Sigmoid colon (tissue), 7 donors: ENCODE measurements at regions of chr9 and their contacts with region 1.

Region 1: GRCh38 chr9:81689343-81690190 is at the start of gene TLE1:
- DNase-seq: peak; percentile 100
- H3K4me3 ChIP-seq: peak within 1 kb of the TSS; percentile 83 to 95 (median 86)
- H3K27ac ChIP-seq: peak within 1 kb of the TSS; percentile 94 to 96 (median 96)
- H3K4me1 ChIP-seq: peaks cover 0 to 32% (median 24%) of the 10 kb centered on the region in 4 donors
- H3K27me3 ChIP-seq: no peaks in the 10 kb centered on the region
- CTCF ChIP-seq: no peak
- EP300 ChIP-seq: peak in 2 of 4 donors; percentile 41 to 65
- POLR2A ChIP-seq: peak; percentile 62 to 66
- total RNA-seq, gene TLE1: 45.7 to 54.6 (median 50.6) TPM

Region 2: DNA sequence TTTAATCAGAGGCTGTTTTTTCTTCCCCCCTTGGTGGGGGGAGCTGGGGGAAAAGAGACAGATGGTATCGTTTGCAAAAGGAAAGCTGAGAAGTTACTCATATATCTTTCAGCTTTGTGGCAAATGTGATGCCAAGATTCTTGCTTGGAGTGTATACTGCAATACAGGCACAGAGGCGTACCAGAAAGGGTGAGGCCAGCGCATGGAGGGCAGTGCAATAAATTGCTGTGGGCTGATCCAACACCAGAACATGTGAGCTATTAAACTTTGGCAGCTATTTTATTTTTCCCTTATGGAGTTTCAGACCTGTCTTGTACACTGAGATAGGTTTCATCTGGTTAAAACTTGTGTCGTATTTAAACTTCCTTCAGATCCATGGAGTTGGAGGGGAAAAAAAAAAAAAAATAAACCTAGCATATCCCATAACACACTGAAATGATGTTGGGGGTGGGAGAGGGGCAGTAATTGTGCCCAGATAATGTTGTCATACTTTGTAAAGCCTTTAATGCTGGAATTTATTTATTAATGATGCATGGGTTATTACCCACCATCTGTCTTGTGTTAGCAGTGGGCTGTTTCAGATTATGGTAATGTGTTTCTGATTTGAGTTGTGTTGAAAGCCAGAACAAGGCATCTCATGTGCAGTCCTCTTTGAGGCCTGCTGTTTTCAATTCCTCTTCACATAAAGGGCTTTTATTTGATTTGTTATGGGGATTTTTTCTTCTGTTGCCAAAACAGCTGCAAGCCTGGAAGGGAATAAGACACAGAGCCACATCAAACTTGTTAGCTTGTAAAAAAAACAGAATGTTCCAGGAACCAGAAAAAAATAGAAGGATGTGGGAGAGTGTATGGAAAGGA is 891.5 kb before region 1 on chr9:
- intact Hi-C with region 1: loop called (anchors 5 kb)
- DNase-seq: peak; percentile 91
- H3K4me3 ChIP-seq: peak overlapping the region in 1 of 4 donors; percentile 6
- H3K27ac ChIP-seq: peak overlapping the region; percentile 69 to 80 (median 76)
- H3K4me1 ChIP-seq: peaks cover 0 to 38% (median 33%) of the 10 kb centered on the region in 4 donors
- H3K27me3 ChIP-seq: no peaks in the 10 kb centered on the region
- CTCF ChIP-seq: no peak
- EP300 ChIP-seq: peak; percentile 47 to 92 (median 76)
- POLR2A ChIP-seq: no peak

Region 3: DNA sequence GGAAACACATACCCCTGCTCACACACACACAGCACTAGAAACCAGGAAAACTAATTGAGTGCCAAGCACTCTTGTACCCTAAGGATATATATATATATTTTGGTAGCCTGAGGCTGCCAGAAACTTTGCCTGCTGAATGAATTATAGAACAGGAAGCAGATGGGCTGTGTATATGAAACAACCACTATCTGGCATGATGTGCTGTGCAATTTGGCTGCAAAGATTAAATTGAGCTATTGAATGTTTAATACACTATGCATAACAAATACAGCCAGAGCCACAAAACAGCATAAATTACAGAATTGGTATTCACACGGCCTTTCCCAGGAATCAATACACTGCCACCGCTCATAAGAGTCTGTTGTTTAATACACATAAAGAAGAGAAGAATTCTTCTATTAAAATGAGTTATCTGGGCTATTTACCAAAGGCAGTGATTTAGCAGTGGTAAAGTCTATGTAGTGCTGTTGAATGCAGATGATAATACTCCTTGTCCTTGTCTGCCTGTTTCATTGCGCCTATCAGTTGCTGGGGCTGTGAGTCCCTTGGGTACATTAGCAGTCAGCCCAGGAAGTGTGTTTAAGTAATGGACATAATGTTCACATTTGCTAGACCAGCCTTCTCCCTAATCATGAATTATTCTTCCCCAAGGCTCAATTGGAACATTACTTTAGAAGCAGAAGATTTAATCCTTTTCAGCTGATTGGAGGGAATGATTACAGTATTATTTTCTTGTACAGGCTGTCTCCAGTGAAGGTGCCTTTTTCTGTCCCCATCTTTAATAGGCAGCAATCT is 294.5 kb before region 1 on chr9:
- intact Hi-C with region 1: loop called (anchors 10 kb)
- DNase-seq: no peak
- H3K4me3 ChIP-seq: no peak overlapping the region
- H3K27ac ChIP-seq: peak overlapping the region; percentile 52 to 75 (median 71)
- H3K4me1 ChIP-seq: peaks cover 0 to 40% (median 38%) of the 10 kb centered on the region in 4 donors
- H3K27me3 ChIP-seq: no peaks in the 10 kb centered on the region
- CTCF ChIP-seq: no peak
- EP300 ChIP-seq: no peak
- POLR2A ChIP-seq: no peak

Region 4: DNA sequence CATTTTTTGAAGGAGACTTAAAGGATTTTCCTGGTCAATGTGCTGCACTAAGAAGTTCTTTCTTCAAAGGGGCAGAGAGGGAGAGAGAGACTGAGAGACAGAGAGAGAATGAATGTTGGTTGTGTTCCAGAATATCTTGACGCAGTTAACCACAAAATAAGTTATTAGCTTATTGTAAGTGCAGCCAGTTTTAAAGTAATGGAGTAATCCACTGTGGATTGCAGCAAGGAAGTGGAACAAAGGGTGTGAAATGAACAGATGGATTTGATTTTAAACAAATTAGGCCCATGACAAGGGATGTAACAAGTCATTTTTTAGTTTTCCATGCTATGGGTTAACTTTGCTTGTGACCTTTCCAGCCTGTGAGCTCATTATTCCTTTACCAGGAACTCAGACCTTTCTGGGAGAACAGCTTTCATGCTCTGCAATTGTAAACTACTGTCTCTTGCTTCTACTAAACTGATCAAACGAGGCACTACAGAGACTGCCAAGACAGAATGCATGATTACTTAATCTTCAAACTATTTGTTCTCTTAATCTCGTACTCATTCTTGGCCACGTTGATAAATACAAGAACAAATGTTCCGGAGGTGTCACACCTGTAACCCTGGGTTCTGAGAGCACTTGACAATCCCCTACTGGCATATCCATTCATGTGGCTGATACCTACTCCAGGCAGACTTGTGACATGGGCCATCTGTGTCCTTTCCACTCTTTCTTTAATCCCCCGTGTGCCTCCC is 131.3 kb before region 1 on chr9:
- intact Hi-C with region 1: no loop called
- DNase-seq: no peak
- H3K4me3 ChIP-seq: no peak overlapping the region
- H3K27ac ChIP-seq: peak overlapping the region; percentile 42 to 70 (median 66)
- H3K4me1 ChIP-seq: peaks cover 0 to 24% (median 16%) of the 10 kb centered on the region in 4 donors
- H3K27me3 ChIP-seq: no peaks in the 10 kb centered on the region
- CTCF ChIP-seq: no peak
- EP300 ChIP-seq: peak in 2 of 4 donors; percentile 25 to 27
- POLR2A ChIP-seq: no peak

Region 5: GRCh38 chr9:81609782-81610739 is 79.5 kb before region 1 on chr9:
- intact Hi-C with region 1: loop called (anchors 1 kb)
- DNase-seq: no peak
- H3K4me3 ChIP-seq: no peak overlapping the region
- H3K27ac ChIP-seq: peak overlapping the region; percentile 38 to 89 (median 82)
- H3K4me1 ChIP-seq: peaks cover 0 to 48% (median 39%) of the 10 kb centered on the region in 4 donors
- H3K27me3 ChIP-seq: no peaks in the 10 kb centered on the region
- CTCF ChIP-seq: no peak
- EP300 ChIP-seq: no peak
- POLR2A ChIP-seq: no peak

Region 6: DNA sequence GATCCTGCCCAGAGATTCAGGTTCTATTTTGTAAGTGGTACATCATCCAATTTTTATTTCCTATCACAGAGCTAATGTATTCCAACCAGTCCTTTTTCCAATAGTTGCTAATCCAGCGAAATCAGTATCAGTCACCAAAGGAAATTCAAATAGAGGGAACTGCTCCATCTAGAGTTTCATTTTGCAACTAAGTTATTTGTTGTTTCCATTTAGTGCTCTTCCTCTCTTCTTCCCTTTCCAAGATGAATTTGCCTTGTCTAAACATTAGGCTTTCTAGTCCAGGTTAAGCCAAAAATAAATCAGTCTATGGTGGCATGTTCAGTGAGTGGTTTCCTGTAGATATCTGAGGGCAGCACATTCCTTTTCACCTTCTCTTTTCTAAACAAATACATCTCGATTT is 158.9 kb after region 1 on chr9:
- intact Hi-C with region 1: loop called (anchors 5 kb)
- DNase-seq: no peak
- H3K4me3 ChIP-seq: no peak overlapping the region
- H3K27ac ChIP-seq: no peak overlapping the region
- H3K4me1 ChIP-seq: peaks cover 0 to 15% (median 6%) of the 10 kb centered on the region in 4 donors
- H3K27me3 ChIP-seq: no peaks in the 10 kb centered on the region
- CTCF ChIP-seq: peak in 3 of 4 experiments; percentile 22 to 32 (median 29)
- EP300 ChIP-seq: no peak
- POLR2A ChIP-seq: no peak